ENCODE measurements at regions of chr7 and their contacts with region 1.

Region 1: DNA sequence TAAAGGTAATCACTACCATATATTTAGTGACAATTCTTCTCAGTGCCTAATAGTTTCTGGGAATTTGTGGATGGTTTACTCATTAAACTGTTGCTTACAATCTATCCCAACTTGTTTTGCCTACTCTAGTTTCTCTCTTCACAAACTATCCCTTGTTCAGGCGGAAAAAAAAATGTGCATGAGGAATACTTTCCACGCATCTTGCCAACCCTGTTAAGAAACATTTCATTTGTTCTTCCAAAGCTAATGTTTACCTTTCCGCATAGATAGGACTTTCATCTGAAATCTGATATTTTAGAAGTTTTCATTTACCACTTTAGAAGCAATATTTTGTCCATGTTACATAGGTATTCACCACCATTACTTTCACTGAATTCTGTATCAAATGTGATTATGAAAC is 191.9 kb downstream of the MDFIC start:
- DNase-seq: no peak
- H3K4me3 ChIP-seq: no peak overlapping the region
- H3K27ac ChIP-seq: no peak overlapping the region
- H3K4me1 ChIP-seq: no peaks in the 10 kb centered on the region
- H3K27me3 ChIP-seq: no peaks in the 10 kb centered on the region
- CTCF ChIP-seq: no peak

Region 2: GRCh38 chr7:114979388-114979787 is 134.4 kb before region 1 on chr7:
- CTCF ChIA-PET with region 1: no interaction called
- POLR2A ChIA-PET with region 1: interaction called, 11 read pairs
- intact Hi-C with region 1: no loop called
- DNase-seq: peak; percentile 73 to 80
- H3K4me3 ChIP-seq: peak overlapping the region; percentile 26; the same call in 1 of the 2 replicates
- H3K27ac ChIP-seq: peak overlapping the region; percentile 52
- H3K4me1 ChIP-seq: peaks cover 21% of the 10 kb centered on the region
- H3K27me3 ChIP-seq: no peaks in the 10 kb centered on the region
- CTCF ChIP-seq: no peak

Region 3: DNA sequence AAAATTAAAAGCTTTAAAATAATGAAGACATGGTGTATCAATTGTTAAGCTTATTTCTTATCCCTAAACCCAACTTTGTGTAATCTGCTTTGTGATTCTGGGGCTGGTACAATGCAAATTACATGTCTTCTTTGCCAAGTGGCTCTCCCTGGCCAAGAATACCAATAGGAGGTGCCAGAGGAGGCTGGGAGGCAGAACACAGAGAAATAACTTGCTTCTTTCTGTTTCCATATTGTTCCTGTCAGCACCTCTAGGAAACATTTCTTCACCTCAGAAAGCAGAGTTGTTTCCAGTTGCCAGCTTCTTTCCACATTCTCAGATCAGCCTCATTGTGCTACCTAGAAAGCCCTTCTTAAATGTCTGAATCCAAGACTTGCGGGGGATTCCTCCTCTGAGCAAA is 17.5 kb before region 1 on chr7:
- CTCF ChIA-PET with region 1: no interaction called
- POLR2A ChIA-PET with region 1: interaction called, 11 read pairs
- intact Hi-C with region 1: no loop called
- DNase-seq: no peak
- H3K4me3 ChIP-seq: no peak overlapping the region
- H3K27ac ChIP-seq: no peak overlapping the region
- H3K4me1 ChIP-seq: peaks cover 17% of the 10 kb centered on the region
- H3K27me3 ChIP-seq: no peaks in the 10 kb centered on the region
- CTCF ChIP-seq: no peak